GM10248 (cell line): ENCODE measurements at regions of chr14 and their contacts with region 1.

Region 1: DNA sequence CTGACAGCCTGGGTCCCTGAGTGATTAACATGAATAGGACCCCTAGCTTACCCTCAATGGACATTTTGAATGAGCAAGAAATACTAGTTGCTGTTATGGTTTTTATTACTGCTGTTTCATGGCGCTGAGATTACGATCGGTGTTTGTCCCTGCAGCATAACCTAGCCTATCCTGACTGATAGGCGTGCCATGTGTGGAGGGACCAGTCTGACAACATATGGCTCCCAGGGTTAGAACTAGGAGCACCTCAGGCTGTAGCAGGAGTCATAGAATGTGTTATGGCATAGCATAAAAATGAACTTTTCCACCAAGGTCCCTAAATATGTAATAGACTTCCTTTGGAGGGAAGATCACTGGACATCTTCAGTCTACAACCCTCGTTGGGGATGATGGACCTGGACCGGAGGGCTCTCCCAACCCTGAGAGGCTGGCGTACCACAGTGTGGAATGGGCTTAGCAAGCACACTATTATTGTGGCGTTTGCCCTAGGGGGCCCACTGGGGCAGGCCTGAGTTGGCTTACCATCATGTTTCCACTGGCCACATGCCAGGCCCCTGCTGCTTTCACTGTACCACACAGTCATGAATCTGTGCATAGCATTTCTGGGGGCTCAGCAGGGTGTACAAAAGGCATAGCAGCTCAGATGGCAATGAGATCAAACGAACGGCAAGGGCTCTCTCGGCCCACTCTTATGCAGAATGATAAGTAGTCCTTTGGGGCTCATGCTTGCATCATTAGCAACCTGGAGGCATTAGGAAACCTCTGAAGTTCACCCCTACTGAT is 137.2 kb upstream of the HIF1A start:
- DNase-seq: no peak
- CTCF ChIP-seq: no peak

Region 2: DNA sequence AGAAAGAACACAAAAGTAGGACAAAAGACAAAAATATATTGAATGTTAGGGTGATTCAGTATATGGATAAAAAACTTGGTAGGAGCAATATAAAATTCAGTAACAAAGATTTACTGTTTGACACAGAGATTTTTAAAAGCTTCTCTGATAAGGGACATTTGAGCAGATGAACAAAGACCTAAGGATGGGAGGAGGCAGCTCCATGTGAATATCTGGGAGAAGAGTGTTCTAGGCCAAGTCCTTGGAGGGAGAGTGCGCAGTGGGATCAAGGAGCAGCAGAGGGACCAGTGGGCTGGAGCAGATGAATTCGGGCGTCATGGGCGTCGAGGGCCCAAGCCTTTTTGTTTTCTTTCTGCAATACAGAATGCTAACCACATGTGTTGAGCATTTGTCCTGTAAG is 62.3 kb before region 1 on chr14:
- CTCF ChIA-PET with region 1: no interaction called
- POLR2A ChIA-PET with region 1: no interaction called
- DNase-seq: no peak
- CTCF ChIP-seq: no peak

Region 3: DNA sequence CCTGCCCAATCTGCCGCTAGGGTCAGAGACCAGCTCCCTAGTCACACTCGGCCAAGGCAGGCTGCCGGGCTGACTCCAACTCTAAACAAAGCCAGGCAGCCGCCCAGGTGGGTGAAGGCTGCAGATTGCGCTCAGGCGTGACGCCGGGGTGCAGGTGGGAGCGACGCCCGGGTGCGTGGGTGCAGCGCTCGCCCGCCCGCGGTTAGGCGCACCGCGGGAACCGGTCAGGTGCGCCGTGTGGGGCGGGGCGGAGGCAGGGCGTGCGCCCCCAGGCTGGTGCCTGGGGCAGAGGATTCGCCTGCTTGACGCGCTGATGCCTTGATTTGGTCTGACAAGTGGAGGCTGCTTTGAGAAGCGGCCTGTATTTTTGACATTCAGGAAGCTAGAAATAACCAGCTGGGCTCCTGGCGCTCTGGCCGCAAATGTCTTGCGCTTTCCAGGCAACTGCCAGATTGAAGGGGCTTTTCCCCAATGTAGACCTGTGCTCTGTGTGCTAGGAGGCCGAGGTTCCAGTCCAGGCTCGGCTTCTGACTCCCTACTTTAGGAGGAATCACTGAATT is 10.6 kb after region 1 on chr14:
- CTCF ChIA-PET with region 1: interaction called, 17 read pairs
- POLR2A ChIA-PET with region 1: interaction called, 5 read pairs
- DNase-seq: peak; percentile 75
- CTCF ChIP-seq: peak; percentile 22

Region 4: GRCh38 chr14:61894452-61895077 is 336.5 kb after region 1 on chr14:
- CTCF ChIA-PET with region 1: no interaction called
- POLR2A ChIA-PET with region 1: no interaction called
- DNase-seq: peak; percentile 66
- CTCF ChIP-seq: peak; percentile 79